CD4-positive, alpha-beta T cell (primary cell): ENCODE measurements at regions of chr9 and their contacts with region 1.

Region 1: DNA sequence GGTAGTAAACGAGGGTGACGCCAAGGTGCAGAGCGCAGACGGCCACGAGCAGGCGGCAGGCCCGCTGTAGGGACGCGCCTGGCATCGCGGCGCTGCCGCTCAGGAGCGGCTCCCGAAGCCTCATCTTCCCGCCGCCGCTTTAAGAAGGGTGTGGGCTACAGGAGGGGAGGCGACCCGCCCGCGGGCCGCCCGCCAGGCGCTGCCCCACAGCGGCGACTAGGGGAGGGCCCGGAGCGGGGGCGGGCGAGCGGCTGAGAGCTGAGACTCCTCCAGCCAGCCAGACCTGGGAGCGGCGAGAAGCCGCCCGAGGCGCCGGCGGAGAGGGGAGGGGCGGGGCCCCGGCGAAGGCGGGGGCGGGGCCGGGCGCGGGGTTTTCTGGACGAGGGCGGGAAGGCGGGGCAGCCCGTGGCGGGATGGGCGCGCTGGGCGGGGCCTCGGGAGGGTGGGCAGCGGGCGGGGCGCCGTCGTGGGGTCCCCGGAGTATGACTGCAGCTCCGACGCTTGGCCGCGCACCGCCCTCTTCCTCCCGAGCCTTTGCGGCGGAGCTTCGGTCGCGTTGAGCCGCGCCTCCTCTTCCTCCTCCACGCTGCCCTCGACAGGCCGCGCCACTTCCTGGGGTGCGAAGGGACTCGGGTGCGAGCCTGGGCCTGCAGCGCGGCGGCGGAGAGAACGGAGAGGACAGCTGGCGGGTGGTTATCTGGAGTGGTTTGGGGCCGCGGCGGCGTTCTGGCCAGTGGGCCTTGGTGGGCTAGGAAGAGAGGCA is at the start of gene B4GALT1:
- DNase-seq: peak; percentile 90 to 99 (median 97)
- ATAC-seq: peak; percentile 77
- H3K4me3 ChIP-seq: peak within 1 kb of the TSS; percentile 85
- H3K4me3 Mint-ChIP-seq: peak within 1 kb of the TSS; percentile 93
- H3K27ac ChIP-seq: peak within 1 kb of the TSS; percentile 89 to 94
- H3K27ac Mint-ChIP-seq: peak within 1 kb of the TSS; percentile 97
- H3K4me1 ChIP-seq: peaks cover 54% of the 10 kb centered on the region
- H3K4me1 Mint-ChIP-seq: peaks cover 61% of the 10 kb centered on the region
- H3K27me3 ChIP-seq: no peaks in the 10 kb centered on the region
- H3K27me3 Mint-ChIP-seq: no peaks in the 10 kb centered on the region
- CTCF ChIP-seq: no peak
- total RNA-seq, gene B4GALT1: 74.7 to 77.0 TPM

Region 2: GRCh38 chr9:32442433-32442832 is 724.8 kb before region 1 on chr9:
- CTCF ChIA-PET with region 1: no interaction called
- POLR2A ChIA-PET with region 1: no interaction called
- intact Hi-C with region 1: no loop called
- DNase-seq: no peak
- ATAC-seq: no peak
- H3K4me3 ChIP-seq: no peak overlapping the region
- H3K4me3 Mint-ChIP-seq: no peak overlapping the region
- H3K27ac ChIP-seq: no peak overlapping the region
- H3K27ac Mint-ChIP-seq: no peak overlapping the region
- H3K4me1 ChIP-seq: no peaks in the 10 kb centered on the region
- H3K4me1 Mint-ChIP-seq: no peaks in the 10 kb centered on the region
- H3K27me3 ChIP-seq: no peaks in the 10 kb centered on the region
- H3K27me3 Mint-ChIP-seq: no peaks in the 10 kb centered on the region
- CTCF ChIP-seq: no peak

Region 3: GRCh38 chr9:32550562-32551433 is 616.4 kb before region 1 on chr9:
- CTCF ChIA-PET with region 1: no interaction called
- POLR2A ChIA-PET with region 1: no interaction called
- intact Hi-C with region 1: loop called in 1 of 2 experiments (anchors 10 kb)
- DNase-seq: peak; percentile 92 to 98 (median 95)
- ATAC-seq: peak; percentile 80
- H3K4me3 ChIP-seq: peak overlapping the region; percentile 86
- H3K4me3 Mint-ChIP-seq: peak overlapping the region; percentile 95
- H3K27ac ChIP-seq: peak overlapping the region; percentile 96 to 97
- H3K27ac Mint-ChIP-seq: peak overlapping the region; percentile 99
- H3K4me1 ChIP-seq: peaks cover 30% of the 10 kb centered on the region
- H3K4me1 Mint-ChIP-seq: peaks cover 60% of the 10 kb centered on the region
- H3K27me3 ChIP-seq: no peaks in the 10 kb centered on the region
- H3K27me3 Mint-ChIP-seq: no peaks in the 10 kb centered on the region
- CTCF ChIP-seq: peak; percentile 50

Region 4: GRCh38 chr9:32801530-32801929 is 365.7 kb before region 1 on chr9:
- CTCF ChIA-PET with region 1: no interaction called
- POLR2A ChIA-PET with region 1: no interaction called
- intact Hi-C with region 1: no loop called
- DNase-seq: no peak
- ATAC-seq: no peak
- H3K4me3 ChIP-seq: no peak overlapping the region
- H3K4me3 Mint-ChIP-seq: no peak overlapping the region
- H3K27ac ChIP-seq: no peak overlapping the region
- H3K27ac Mint-ChIP-seq: no peak overlapping the region
- H3K4me1 ChIP-seq: no peaks in the 10 kb centered on the region
- H3K4me1 Mint-ChIP-seq: no peaks in the 10 kb centered on the region
- H3K27me3 ChIP-seq: no peaks in the 10 kb centered on the region
- H3K27me3 Mint-ChIP-seq: peaks cover 49% of the 10 kb centered on the region
- CTCF ChIP-seq: no peak

Region 5: GRCh38 chr9:33076358-33077004 is 90.7 kb before region 1 on chr9 and contains the start of gene SMU1:
- CTCF ChIA-PET with region 1: interaction called, 3 read pairs
- POLR2A ChIA-PET with region 1: interaction called, 33 read pairs
- intact Hi-C with region 1: loop called (anchors 1 to 2 kb)
- DNase-seq: peak; percentile 90 to 98 (median 94)
- ATAC-seq: peak; percentile 90
- H3K4me3 ChIP-seq: peak within 1 kb of the TSS; percentile 67
- H3K4me3 Mint-ChIP-seq: peak within 1 kb of the TSS; percentile 97
- H3K27ac ChIP-seq: peak within 1 kb of the TSS; percentile 88 to 94
- H3K27ac Mint-ChIP-seq: peak within 1 kb of the TSS; percentile 98
- H3K4me1 ChIP-seq: peaks cover 42% of the 10 kb centered on the region
- H3K4me1 Mint-ChIP-seq: peaks cover 48% of the 10 kb centered on the region
- H3K27me3 ChIP-seq: no peaks in the 10 kb centered on the region
- H3K27me3 Mint-ChIP-seq: no peaks in the 10 kb centered on the region
- CTCF ChIP-seq: no peak
- total RNA-seq, gene SMU1: 25.1 to 26.0 TPM

Region 6: GRCh38 chr9:33130508-33130911 is 36.7 kb before region 1 on chr9:
- CTCF ChIA-PET with region 1: interaction called, 3 read pairs
- POLR2A ChIA-PET with region 1: no interaction called
- intact Hi-C with region 1: loop called (anchors 2 to 5 kb)
- DNase-seq: peak in 2 of 14 experiments; percentile 31 to 47
- ATAC-seq: peak; percentile 46
- H3K4me3 ChIP-seq: no peak overlapping the region
- H3K4me3 Mint-ChIP-seq: no peak overlapping the region
- H3K27ac ChIP-seq: no peak overlapping the region
- H3K27ac Mint-ChIP-seq: peak overlapping the region; percentile 42
- H3K4me1 ChIP-seq: peaks cover 27% of the 10 kb centered on the region
- H3K4me1 Mint-ChIP-seq: peaks cover 32% of the 10 kb centered on the region
- H3K27me3 ChIP-seq: no peaks in the 10 kb centered on the region
- H3K27me3 Mint-ChIP-seq: no peaks in the 10 kb centered on the region
- CTCF ChIP-seq: no peak

Region 7: DNA sequence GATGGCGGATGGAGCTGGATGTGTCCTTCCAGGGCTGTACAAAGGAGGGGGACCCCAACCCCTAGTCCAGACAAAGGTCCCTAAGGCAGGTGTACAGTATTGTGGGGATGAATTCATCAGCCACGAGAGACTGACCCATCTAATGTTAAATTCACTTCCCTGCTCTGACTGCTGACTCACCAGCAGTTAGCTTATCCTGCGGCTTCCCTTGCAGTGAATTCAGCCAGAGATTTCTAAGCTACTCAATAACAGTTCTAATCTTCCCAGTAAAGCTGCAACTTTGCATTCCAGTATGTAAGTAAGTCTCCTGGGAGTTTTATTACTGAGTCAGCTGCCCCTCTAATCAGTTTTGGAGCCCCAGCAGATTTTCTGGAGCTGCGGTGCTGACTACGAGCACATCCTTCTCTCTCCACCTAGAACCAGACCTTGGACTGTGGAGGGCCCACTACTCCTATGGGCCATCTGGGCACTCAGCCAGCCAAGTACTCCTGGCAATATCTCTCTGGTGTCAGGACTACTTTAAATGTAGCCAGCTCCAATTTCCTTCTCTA is 16.1 kb before region 1 on chr9:
- CTCF ChIA-PET with region 1: interaction called, 7 read pairs
- POLR2A ChIA-PET with region 1: interaction called, 13 read pairs
- intact Hi-C with region 1: loop called in 1 of 2 experiments (anchors 2 kb)
- DNase-seq: no peak
- ATAC-seq: no peak
- H3K4me3 ChIP-seq: no peak overlapping the region
- H3K4me3 Mint-ChIP-seq: no peak overlapping the region
- H3K27ac ChIP-seq: no peak overlapping the region
- H3K27ac Mint-ChIP-seq: peak overlapping the region; percentile 31
- H3K4me1 ChIP-seq: peaks cover 69% of the 10 kb centered on the region
- H3K4me1 Mint-ChIP-seq: peaks cover 87% of the 10 kb centered on the region
- H3K27me3 ChIP-seq: no peaks in the 10 kb centered on the region
- H3K27me3 Mint-ChIP-seq: no peaks in the 10 kb centered on the region
- CTCF ChIP-seq: no peak

Region 8: GRCh38 chr9:33236366-33236970 is 69.2 kb after region 1 on chr9:
- CTCF ChIA-PET with region 1: no interaction called
- POLR2A ChIA-PET with region 1: no interaction called
- intact Hi-C with region 1: no loop called
- DNase-seq: no peak
- ATAC-seq: no peak
- H3K4me3 ChIP-seq: no peak overlapping the region
- H3K4me3 Mint-ChIP-seq: no peak overlapping the region
- H3K27ac ChIP-seq: no peak overlapping the region
- H3K27ac Mint-ChIP-seq: no peak overlapping the region
- H3K4me1 ChIP-seq: peaks cover 3% of the 10 kb centered on the region
- H3K4me1 Mint-ChIP-seq: peaks cover 4% of the 10 kb centered on the region
- H3K27me3 ChIP-seq: peaks cover 0 to 2% of the 10 kb centered on the region in 2 experiments
- H3K27me3 Mint-ChIP-seq: no peaks in the 10 kb centered on the region
- CTCF ChIP-seq: no peak

Region 9: DNA sequence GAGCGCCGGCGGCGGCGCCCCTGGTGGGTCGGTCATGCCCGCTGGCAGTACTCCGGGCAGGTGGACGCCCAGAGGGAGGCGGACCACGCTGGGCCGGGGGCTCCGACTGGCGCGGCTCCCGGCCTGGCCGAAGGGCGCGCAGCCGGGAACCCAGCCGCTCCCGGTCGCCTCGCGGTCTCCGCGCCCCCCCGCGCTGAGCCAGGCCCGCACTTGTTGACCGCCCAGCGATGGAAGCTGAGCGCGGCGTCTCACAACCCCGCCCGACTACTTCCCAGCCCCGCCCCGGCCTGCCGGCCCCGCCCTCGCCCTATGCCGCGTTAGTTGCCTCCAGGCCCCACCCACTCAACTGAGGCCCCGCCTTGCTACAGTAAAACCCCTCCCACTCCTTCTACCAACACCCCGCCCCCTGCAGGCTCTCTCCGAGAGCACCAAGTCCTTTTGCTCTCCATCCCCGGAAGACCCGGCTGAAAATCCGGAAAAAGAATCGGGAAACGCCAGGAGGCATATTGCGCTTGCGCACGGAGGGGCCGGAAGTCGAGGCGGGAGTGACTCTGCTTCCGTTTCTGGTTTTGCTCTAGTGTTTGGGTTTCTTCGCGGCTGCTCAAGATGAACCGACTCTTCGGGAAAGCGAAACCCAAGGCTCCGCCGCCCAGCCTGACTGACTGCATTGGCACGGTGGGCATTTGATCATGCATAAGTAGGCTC is 97.4 kb after region 1 on chr9 and contains the starts of genes BAG1 and CHMP5:
- CTCF ChIA-PET with region 1: no interaction called
- POLR2A ChIA-PET with region 1: interaction called, 15 read pairs
- intact Hi-C with region 1: loop called (anchors 2 kb)
- DNase-seq: peak; percentile 99 to 100 (median 100)
- ATAC-seq: peak; percentile 96
- H3K4me3 ChIP-seq: peak within 1 kb of the TSS; percentile 94
- H3K4me3 Mint-ChIP-seq: peak within 1 kb of the TSS; percentile 96
- H3K27ac ChIP-seq: peak within 1 kb of the TSS; percentile 59 to 86
- H3K27ac Mint-ChIP-seq: peak within 1 kb of the TSS; percentile 91
- H3K4me1 ChIP-seq: peaks cover 31% of the 10 kb centered on the region
- H3K4me1 Mint-ChIP-seq: peaks cover 63% of the 10 kb centered on the region
- H3K27me3 ChIP-seq: no peaks in the 10 kb centered on the region
- H3K27me3 Mint-ChIP-seq: no peaks in the 10 kb centered on the region
- CTCF ChIP-seq: no peak
- total RNA-seq, gene BAG1: 58.0 to 61.4 TPM
- total RNA-seq, gene CHMP5: 17.4 to 18.6 TPM

Region 10: DNA sequence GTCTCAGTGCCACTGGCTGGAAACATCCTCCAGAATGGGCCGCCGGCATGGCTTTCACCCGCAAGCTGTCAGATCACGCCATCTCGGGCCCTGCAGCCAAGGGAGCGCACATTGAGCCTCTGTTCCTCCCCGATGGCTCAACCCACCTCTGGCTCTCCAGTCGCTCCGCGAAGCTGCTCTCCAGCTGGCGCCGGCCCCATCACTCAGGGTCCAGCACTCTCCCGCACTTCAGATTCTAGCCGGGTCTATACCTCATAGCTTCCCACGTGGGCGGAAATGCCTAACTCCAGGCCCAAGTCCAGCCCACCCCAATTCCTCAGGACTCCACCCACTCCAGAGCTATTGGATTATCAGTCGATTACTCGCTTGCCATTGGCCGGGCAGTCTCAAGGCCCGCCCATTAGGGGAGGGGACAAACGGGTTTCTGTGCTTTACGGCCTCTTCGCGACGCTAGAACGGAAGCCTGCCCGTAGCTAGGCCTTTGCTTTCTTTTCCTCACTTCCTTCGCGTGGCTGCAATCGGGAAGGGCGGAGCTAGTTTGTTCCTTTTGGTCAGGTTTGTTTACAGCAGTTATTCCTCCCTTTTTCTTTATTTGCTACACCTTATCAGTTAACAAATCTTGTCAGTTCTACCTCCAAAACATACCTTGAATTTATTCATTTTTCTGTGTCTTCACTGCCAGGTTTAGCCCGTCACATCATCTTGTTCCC is 306.6 kb after region 1 on chr9 and contains the start of gene NOL6:
- CTCF ChIA-PET with region 1: no interaction called
- POLR2A ChIA-PET with region 1: interaction called, 4 read pairs
- intact Hi-C with region 1: loop called in 1 of 2 experiments (anchors 10 kb)
- DNase-seq: peak; percentile 96 to 99 (median 97)
- ATAC-seq: peak; percentile 99
- H3K4me3 ChIP-seq: peak within 1 kb of the TSS; percentile 92
- H3K4me3 Mint-ChIP-seq: peak within 1 kb of the TSS; percentile 99
- H3K27ac ChIP-seq: peak within 1 kb of the TSS; percentile 58 to 64
- H3K27ac Mint-ChIP-seq: peak within 1 kb of the TSS; percentile 89
- H3K4me1 ChIP-seq: peaks cover 25% of the 10 kb centered on the region
- H3K4me1 Mint-ChIP-seq: peaks cover 33% of the 10 kb centered on the region
- H3K27me3 ChIP-seq: no peaks in the 10 kb centered on the region
- H3K27me3 Mint-ChIP-seq: no peaks in the 10 kb centered on the region
- CTCF ChIP-seq: no peak
- total RNA-seq, gene NOL6: 30.5 to 30.6 TPM